CD8-positive, alpha-beta T cell (primary cell): ENCODE measurements at regions of chr15 and their contacts with region 1.

Region 1: GRCh38 chr15:60315878-60316277 is 81.9 kb downstream of the ANXA2 start:
- DNase-seq: no peak
- ATAC-seq: no peak
- H3K4me3 ChIP-seq: no peak overlapping the region
- H3K4me3 Mint-ChIP-seq: no peak overlapping the region
- H3K27ac ChIP-seq: no peak overlapping the region
- H3K27ac Mint-ChIP-seq: no peak overlapping the region
- H3K4me1 ChIP-seq: no peaks in the 10 kb centered on the region
- H3K4me1 Mint-ChIP-seq: no peaks in the 10 kb centered on the region
- H3K27me3 ChIP-seq: no peaks in the 10 kb centered on the region
- H3K27me3 Mint-ChIP-seq: peaks cover 13% of the 10 kb centered on the region
- CTCF ChIP-seq: no peak

Region 2: GRCh38 chr15:60326824-60327654 is 11.2 kb after region 1 on chr15:
- CTCF ChIA-PET with region 1: interaction called, 12 read pairs
- POLR2A ChIA-PET with region 1: no interaction called
- intact Hi-C with region 1: no loop called
- DNase-seq: peak in 5 of 9 experiments; percentile 8 to 72 (median 32)
- ATAC-seq: peak; percentile 40
- H3K4me3 ChIP-seq: no peak overlapping the region
- H3K4me3 Mint-ChIP-seq: no peak overlapping the region
- H3K27ac ChIP-seq: no peak overlapping the region
- H3K27ac Mint-ChIP-seq: no peak overlapping the region
- H3K4me1 ChIP-seq: no peaks in the 10 kb centered on the region
- H3K4me1 Mint-ChIP-seq: peaks cover 2% of the 10 kb centered on the region
- H3K27me3 ChIP-seq: peaks cover 0 to 5% of the 10 kb centered on the region in 2 experiments
- H3K27me3 Mint-ChIP-seq: peaks cover 34% of the 10 kb centered on the region
- CTCF ChIP-seq: peak; percentile 73